Heart right ventricle (tissue), 16 donors: ENCODE measurements at regions of chr9 and their contacts with region 1.

Region 1: GRCh38 chr9:128191406-128192046 is at the start of gene CIZ1:
- DNase-seq: peak; percentile 73 to 83
- ATAC-seq: peak; percentile 86 to 94 (median 92)
- H3K4me3 ChIP-seq: peak within 1 kb of the TSS; percentile 48 to 97 (median 88)
- H3K27ac ChIP-seq: peak within 1 kb of the TSS; percentile 74 to 94 (median 88)
- H3K4me1 ChIP-seq: peaks cover 10 to 32% (median 21%) of the 10 kb centered on the region in 9 donors
- H3K27me3 ChIP-seq: no peaks in the 10 kb centered on the region
- CTCF ChIP-seq: peak; percentile 67 to 93 (median 82)
- total RNA-seq, gene CIZ1: 63.0 to 96.0 (median 76.7) TPM

Region 2: GRCh38 chr9:128339771-128340690 is 148.5 kb after region 1 on chr9 and contains the start of gene SLC27A4:
- intact Hi-C with region 1: loop called in 3 of 10 experiments (anchors 10 kb)
- DNase-seq: peak; percentile 58 to 80
- ATAC-seq: peak; percentile 90 to 95 (median 92)
- H3K4me3 ChIP-seq: peak within 1 kb of the TSS; percentile 58 to 96 (median 86)
- H3K27ac ChIP-seq: peak within 1 kb of the TSS in 9 of 10 donors; percentile 64 to 85 (median 77)
- H3K4me1 ChIP-seq: peaks cover 0 to 18% (median 13%) of the 10 kb centered on the region in 9 donors
- H3K27me3 ChIP-seq: no peaks in the 10 kb centered on the region
- CTCF ChIP-seq: peak in 1 of 9 donors; percentile 9
- total RNA-seq, gene SLC27A4: 10.0 to 26.3 (median 15.5) TPM